Colonic mucosa (tissue), 4 donors: ENCODE measurements at regions of chr20 and their contacts with region 1.

Region 1: DNA sequence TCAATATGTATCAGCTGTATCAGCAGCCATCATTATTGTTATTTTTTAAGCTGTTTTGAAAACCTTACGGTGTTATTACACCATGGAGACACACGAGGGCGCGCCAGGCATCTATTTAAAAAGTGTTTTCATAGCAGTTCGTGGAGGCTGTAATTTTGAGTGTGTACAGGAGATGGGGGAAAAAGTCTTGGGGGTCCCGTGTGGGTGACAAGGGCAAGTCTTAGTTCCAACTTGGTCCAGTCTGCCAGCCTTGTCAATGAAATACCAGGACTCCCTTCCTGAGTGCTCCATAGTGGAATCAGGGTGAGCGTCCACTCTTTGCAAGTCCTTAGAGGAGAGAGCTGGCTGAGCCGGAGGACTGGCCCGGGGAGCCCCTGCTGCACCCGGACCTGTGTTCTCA is 43.3 kb downstream of the SLC2A10 start:
- DNase-seq: peak; percentile 58
- H3K4me3 ChIP-seq: no peak overlapping the region
- H3K27ac ChIP-seq: no peak overlapping the region
- H3K4me1 ChIP-seq: no peaks in the 10 kb centered on the region
- H3K27me3 ChIP-seq: no peaks in the 10 kb centered on the region
- CTCF ChIP-seq: peak; percentile 70

Region 2: GRCh38 chr20:46699651-46700359 is 52.9 kb before region 1 on chr20:
- intact Hi-C with region 1: no loop called
- DNase-seq: no peak
- H3K4me3 ChIP-seq: no peak overlapping the region
- H3K27ac ChIP-seq: no peak overlapping the region
- H3K4me1 ChIP-seq: no peaks in the 10 kb centered on the region
- H3K27me3 ChIP-seq: no peaks in the 10 kb centered on the region
- CTCF ChIP-seq: peak; percentile 50

Region 3: GRCh38 chr20:47196091-47197081 is 443.7 kb after region 1 on chr20:
- intact Hi-C with region 1: loop called (anchors 2 kb)
- DNase-seq: peak; percentile 76
- H3K4me3 ChIP-seq: no peak overlapping the region
- H3K27ac ChIP-seq: no peak overlapping the region
- H3K4me1 ChIP-seq: no peaks in the 10 kb centered on the region
- H3K27me3 ChIP-seq: no peaks in the 10 kb centered on the region
- CTCF ChIP-seq: peak; percentile 93